ENCODE measurements at regions of chr9 and their contacts with region 1.

Region 1: GRCh38 chr9:131366761-131367401 is 27.0 kb upstream of the PRRC2B start:
- DNase-seq: peak; percentile 36

Region 2: DNA sequence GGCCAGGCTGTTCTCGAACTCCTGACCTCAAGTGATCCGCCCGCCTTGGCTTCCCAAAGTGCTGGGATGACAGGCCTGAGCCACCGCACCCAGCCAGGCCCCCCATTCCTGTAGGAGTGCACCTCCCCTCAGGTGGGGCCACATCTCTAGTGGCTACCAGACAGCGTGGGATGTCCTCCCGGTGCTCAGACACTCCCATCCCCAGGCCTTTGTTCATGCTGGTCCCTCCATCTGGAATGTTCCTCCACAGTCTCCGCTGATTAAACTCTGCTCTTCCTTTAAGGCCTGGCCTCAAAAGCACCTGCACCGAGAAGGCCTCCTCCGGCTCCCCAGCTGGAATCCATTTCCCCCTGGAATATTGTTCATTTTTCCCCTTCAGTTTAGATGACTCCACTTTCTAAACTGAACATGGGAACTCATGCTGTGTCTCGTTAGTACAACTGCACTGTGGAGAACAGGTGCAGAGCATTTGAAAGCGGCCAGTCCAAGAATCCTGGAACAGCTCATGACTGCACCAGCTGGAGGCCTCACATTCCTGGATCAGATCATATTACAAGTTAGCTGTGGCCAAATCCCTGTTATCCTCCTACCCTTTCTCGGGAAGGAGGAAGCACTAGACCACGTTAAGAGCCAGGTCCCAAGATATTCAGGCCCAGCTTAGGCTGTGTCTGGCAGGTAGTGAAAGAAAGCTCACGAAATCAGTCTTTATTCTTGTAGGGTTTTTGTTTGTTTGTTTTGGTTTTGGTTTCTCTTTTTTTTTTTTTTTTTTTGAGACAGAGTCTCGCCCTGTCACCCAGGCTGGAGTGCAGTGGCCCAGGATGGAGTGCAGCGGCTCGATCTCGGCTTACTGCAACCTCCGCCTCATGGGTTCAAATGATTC is 16.2 kb after region 1 on chr9:
- CTCF ChIA-PET with region 1: interaction called, 3 read pairs
- POLR2A ChIA-PET with region 1: interaction called, 29 read pairs
- DNase-seq: peak; percentile 71

Region 3: DNA sequence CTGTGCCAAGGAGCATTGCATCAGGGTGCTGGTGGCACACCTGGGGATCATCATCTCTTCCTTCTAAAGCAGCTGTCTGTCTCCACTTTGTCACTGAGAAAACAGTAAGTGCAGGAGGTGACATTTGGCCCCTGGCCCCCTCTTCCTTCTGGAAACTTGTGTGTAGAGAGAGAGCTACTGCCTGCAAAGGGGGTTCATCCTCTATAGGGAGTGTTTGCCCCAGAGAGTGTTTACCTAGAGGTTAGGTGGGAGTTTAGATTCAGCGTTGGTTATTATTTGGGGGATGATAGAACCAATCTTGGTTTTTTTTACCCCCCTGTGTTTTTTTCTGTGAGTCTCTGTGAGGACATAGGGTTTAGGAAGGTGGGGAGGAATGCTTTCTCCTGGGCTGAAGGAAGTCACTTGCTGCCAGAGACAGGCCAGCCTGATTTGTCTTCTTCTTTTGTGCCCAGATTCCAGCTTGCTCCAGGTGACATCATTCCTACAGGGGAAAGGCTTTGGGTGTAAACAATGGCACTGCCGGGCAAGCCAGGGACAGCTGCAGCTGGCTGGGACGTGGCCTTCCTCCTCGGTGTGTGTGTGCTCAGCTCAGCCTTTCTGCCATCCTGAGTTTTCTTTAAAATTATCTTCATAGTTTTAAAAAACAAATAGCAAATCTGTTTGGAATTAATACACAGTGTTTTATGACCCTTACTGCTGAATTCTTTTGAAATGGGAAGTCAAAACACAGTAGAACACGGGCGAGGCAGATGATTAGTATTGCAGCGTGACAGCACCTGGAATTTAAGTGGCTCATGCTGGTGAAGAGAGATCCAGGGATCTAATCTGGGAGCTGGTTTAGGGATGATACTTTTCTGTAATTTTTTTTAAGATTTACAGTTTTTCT is 51.5 kb after region 1 on chr9:
- CTCF ChIA-PET with region 1: interaction called, 4 read pairs
- POLR2A ChIA-PET with region 1: interaction called, 14 read pairs
- DNase-seq: no peak

Region 4: DNA sequence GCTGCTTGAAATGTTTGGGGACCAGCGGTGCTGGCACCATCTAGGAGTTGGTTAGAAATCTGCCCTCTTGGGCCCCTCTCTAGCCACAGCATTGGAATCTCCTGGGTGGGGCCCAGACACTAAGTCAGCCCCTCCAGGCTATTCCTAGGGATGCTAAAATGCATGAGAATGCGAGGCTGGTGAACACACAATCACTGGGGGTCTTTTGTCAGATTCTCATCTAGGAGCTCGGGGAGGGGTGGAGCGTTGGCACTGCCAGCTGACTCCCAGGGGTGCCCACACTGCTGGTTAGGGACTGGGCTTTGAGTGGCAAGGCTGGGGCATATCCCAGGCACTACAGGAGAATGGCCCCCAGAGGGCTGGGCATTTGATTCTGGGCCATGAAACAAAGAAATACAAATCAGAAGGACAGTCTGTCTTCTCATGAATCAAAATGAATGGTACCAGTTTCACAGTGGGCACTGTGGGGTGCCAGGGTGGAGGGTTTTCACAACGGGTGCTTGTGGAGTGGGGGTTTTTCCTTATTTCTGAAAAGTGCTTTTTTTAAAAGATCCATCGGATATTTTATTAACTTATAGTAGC is 500.8 kb after region 1 on chr9:
- CTCF ChIA-PET with region 1: no interaction called
- POLR2A ChIA-PET with region 1: no interaction called
- DNase-seq: no peak

Measured in HEK293T (cell line).